Heart left ventricle (tissue), 16 donors: ENCODE measurements at regions of chr1 and their contacts with region 1.

Region 1: GRCh38 chr1:85612704-85613361 is 32.3 kb downstream of the CCN1 start:
- DNase-seq: no peak
- ATAC-seq: peak; percentile 42 to 72 (median 56)
- H3K4me3 ChIP-seq: no peak overlapping the region
- H3K27ac ChIP-seq: peak overlapping the region in 7 of 12 donors; percentile 23 to 86 (median 66)
- H3K4me1 ChIP-seq: peaks cover 0 to 24% (median 8%) of the 10 kb centered on the region in 12 donors
- H3K27me3 ChIP-seq: no peaks in the 10 kb centered on the region
- CTCF ChIP-seq: peak in 6 of 12 donors; percentile 16 to 50 (median 38)
- POLR2A ChIP-seq: no peak

Region 2: GRCh38 chr1:85638412-85638811 is 25.6 kb after region 1 on chr1:
- intact Hi-C with region 1: loop called in 1 of 10 experiments (anchors 2 kb)
- DNase-seq: no peak
- ATAC-seq: no peak
- H3K4me3 ChIP-seq: no peak overlapping the region
- H3K27ac ChIP-seq: no peak overlapping the region
- H3K4me1 ChIP-seq: no peaks in the 10 kb centered on the region
- H3K27me3 ChIP-seq: no peaks in the 10 kb centered on the region
- CTCF ChIP-seq: no peak
- POLR2A ChIP-seq: no peak

Region 3: DNA sequence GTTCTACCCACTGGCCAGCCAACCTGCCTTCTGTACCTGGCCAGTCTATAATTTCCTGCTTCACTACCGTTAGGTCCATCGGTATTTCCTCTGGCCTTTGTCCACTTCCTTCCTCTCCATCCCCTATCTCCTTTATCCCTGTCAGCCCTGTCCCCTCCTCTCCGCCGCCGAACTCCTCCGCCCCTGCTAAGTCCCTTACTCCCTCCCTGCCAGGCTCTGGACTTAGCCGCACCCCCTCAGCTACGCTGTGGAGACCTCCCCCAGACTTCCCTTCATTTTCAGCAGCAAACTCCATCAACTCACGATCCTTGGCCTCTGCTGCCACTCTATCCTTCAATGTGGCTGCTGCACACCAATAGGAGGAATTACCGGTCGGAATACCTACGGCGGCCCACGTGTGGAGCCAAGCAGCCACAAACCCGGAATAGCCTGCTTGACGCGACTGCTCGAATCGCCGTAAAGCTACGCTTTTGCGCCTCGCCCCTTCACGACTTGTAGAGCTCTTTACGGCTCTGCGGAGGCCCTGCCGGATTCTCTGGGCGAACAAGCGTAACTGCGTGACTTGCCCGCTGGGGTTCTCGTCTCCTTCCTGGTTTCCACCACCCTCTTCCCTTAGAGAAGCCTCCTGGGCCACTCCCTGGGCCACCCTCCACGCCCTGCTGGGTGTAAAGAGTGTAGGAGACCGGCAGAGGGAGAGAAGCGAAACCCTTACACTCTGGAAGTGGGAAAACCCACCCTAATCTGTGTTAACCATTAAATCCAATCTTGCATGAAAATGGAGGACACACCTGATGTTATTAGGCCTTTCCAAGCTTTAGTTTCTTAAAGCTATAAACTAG is 95.4 kb after region 1 on chr1 and contains the start of gene ZNHIT6:
- intact Hi-C with region 1: loop called in 1 of 10 experiments (anchors 5 kb)
- DNase-seq: peak; percentile 89 to 95 (median 90)
- ATAC-seq: peak; percentile 95 to 98 (median 98)
- H3K4me3 ChIP-seq: peak within 1 kb of the TSS; percentile 56 to 92 (median 80)
- H3K27ac ChIP-seq: peak within 1 kb of the TSS; percentile 53 to 93 (median 86)
- H3K4me1 ChIP-seq: peaks cover 0 to 24% (median 14%) of the 10 kb centered on the region in 12 donors
- H3K27me3 ChIP-seq: no peaks in the 10 kb centered on the region
- CTCF ChIP-seq: peak in 9 of 12 donors; percentile 14 to 50 (median 32)
- POLR2A ChIP-seq: peak in 1 of 2 donors; percentile 58
- total RNA-seq, gene ZNHIT6: 7.1 to 12.8 (median 9.9) TPM